Endothelial cell of umbilical vein (primary cell): ENCODE measurements at regions of chr17 and their contacts with region 1.

Region 1: DNA sequence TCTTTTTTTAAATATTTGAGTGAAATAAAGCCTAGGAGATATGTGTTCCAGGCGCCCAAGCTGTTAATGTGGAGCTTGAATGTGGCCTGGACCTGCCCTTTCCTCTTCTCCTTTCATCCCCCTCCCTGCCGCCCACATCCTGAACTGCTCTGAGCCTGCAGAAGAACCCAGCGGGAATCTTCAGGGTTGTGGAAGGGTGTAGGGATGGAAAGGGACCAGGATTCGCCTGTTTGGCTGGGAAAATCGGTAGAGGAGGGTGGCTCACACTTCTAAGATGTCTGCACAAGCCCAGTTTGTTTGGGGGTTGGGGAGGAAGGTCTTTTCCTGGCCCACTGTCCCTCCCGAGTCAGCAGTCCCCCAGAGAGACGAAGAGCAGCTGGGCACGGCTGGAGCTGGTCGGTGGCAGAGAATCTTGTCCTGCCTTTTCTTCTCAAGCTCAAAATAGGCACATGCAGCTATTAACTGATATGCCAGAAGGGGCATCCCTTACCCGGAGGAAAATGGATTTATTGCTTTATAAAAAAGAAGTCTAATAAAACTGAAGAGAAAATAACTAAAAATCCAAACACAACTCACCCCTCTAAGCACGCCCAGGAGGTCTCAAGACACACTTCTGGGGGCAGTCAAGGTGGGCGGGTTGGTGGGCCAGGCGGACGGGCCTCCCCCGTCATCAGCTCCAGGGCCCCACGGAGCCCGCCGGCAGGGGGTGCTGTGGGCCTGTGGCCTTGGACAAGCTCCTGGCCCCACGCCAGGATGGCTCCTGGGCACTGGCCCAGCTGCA is 11.5 kb upstream of the PITPNA start:
- DNase-seq: peak; percentile 76
- H3K4me3 ChIP-seq: no peak overlapping the region
- H3K27ac ChIP-seq: no peak overlapping the region
- H3K4me1 ChIP-seq: peaks cover 21% of the 10 kb centered on the region
- H3K27me3 ChIP-seq: no peaks in the 10 kb centered on the region
- CTCF ChIP-seq: peak; percentile 96 to 99
- POLR2A ChIP-seq: no peak

Region 2: GRCh38 chr17:1522626-1523025 is 51.5 kb before region 1 on chr17:
- CTCF ChIA-PET with region 1: no interaction called
- POLR2A ChIA-PET with region 1: no interaction called
- dilution Hi-C with region 1: no loop called
- intact Hi-C with region 1: no loop called
- DNase-seq: no peak
- H3K4me3 ChIP-seq: no peak overlapping the region
- H3K27ac ChIP-seq: no peak overlapping the region
- H3K4me1 ChIP-seq: peaks cover 1% of the 10 kb centered on the region
- H3K27me3 ChIP-seq: no peaks in the 10 kb centered on the region
- CTCF ChIP-seq: no peak
- POLR2A ChIP-seq: no peak

Region 3: DNA sequence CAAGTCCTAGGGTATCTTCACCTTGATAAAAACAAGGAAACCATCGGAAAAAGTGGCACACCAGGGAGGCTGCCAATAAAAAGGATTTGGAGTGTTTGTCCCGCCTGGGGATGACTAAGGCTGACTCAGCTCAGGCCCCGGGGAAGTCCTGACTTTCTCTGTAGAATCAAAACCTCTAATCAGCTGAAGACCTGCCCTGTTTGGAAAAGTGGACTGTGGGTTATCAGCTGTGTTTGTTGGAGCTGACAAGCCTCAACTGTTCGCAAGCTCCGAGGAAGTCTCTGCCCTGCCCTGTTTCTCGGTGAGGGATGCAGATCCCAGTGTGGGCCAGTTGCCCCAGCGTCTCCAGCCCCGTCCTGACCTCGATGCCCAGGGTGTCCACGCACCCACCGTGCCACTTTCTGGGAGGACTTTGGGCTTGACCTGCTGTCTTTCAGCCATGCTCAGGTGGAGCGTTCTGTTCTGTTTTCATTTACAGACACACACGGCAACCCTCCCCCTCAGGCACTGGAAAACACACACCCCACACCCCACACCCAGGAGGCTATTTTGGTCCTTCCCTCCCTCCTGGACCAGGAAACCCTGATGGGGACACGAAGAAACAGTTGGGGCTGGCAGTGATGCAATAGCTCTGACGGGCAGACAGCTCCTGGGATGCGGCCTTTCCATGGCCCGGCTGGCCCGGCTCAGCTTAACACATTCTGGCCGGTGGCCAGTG is 16.1 kb after region 1 on chr17:
- CTCF ChIA-PET with region 1: interaction called, 15 read pairs
- POLR2A ChIA-PET with region 1: no interaction called
- dilution Hi-C with region 1: no loop called
- intact Hi-C with region 1: loop called (anchors 1 kb)
- DNase-seq: peak; percentile 95
- H3K4me3 ChIP-seq: no peak overlapping the region
- H3K27ac ChIP-seq: peak overlapping the region; percentile 73
- H3K4me1 ChIP-seq: peaks cover 18% of the 10 kb centered on the region
- H3K27me3 ChIP-seq: no peaks in the 10 kb centered on the region
- CTCF ChIP-seq: no peak
- POLR2A ChIP-seq: peak; percentile 58

Region 4: GRCh38 chr17:1617620-1618174 is 43.6 kb after region 1 on chr17:
- CTCF ChIA-PET with region 1: interaction called, 100 read pairs
- POLR2A ChIA-PET with region 1: no interaction called
- dilution Hi-C with region 1: no loop called
- intact Hi-C with region 1: no loop called
- DNase-seq: peak; percentile 87
- H3K4me3 ChIP-seq: no peak overlapping the region
- H3K27ac ChIP-seq: peak overlapping the region; percentile 80
- H3K4me1 ChIP-seq: peaks cover 19% of the 10 kb centered on the region
- H3K27me3 ChIP-seq: no peaks in the 10 kb centered on the region
- CTCF ChIP-seq: no peak
- POLR2A ChIP-seq: peak; percentile 52

Region 5: DNA sequence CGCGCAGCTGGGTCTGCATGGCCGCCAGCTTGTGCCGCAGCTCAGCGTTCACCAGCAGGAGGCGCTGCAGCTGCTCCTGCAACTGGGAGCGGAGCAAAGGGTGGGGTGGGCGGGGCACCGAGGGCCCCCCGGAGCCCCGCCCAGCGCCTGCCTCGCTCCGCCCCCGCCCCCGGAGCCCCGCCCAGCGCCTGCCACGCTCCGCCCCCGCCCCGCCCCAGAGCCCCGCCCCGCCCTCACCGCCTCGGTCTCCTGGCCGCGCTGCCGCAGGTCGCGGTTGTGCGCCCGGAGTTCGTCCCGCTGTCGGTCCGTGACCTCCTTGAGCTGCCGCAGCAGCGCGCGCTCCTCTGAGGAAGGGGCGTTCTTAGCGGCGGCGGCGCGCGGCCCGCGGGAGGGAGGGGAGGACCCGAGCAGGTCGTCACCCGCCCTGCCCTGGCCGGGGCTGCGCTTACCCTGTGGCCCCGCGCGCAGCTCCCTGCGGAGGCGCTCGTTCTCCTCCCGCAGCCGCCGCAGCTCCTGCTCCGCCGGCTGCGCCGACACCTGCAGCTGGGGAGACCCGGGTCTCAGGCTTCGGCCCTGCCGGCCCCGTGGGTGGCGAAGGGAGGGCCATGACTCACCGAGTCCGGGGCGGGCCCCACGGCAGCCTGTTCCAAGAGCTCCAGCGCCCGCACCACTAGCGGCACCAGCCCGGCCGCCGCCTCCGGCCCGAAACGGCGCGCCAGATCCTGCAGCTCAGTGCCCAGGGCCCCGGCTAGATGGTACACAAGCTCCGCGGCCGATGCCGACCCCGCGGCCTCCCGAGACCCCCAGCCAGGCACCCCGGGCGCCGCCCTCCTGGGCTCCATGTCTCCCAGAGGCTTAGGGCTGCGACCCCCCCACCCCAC is 75.1 kb after region 1 on chr17:
- CTCF ChIA-PET with region 1: interaction called, 218 read pairs
- POLR2A ChIA-PET with region 1: interaction called, 9 read pairs
- dilution Hi-C with region 1: no loop called
- intact Hi-C with region 1: loop called (anchors 1 kb)
- DNase-seq: peak; percentile 94
- H3K4me3 ChIP-seq: peak overlapping the region; percentile 10 to 52 (median 39)
- H3K27ac ChIP-seq: peak overlapping the region; percentile 54
- H3K4me1 ChIP-seq: peaks cover 40% of the 10 kb centered on the region
- H3K27me3 ChIP-seq: no peaks in the 10 kb centered on the region
- CTCF ChIP-seq: peak; percentile 63 to 94
- POLR2A ChIP-seq: peak; percentile 46